Naive thymus-derived CD4-positive, alpha-beta T cell (primary cell): ENCODE measurements at regions of chr10 and their contacts with region 1.

Region 1: DNA sequence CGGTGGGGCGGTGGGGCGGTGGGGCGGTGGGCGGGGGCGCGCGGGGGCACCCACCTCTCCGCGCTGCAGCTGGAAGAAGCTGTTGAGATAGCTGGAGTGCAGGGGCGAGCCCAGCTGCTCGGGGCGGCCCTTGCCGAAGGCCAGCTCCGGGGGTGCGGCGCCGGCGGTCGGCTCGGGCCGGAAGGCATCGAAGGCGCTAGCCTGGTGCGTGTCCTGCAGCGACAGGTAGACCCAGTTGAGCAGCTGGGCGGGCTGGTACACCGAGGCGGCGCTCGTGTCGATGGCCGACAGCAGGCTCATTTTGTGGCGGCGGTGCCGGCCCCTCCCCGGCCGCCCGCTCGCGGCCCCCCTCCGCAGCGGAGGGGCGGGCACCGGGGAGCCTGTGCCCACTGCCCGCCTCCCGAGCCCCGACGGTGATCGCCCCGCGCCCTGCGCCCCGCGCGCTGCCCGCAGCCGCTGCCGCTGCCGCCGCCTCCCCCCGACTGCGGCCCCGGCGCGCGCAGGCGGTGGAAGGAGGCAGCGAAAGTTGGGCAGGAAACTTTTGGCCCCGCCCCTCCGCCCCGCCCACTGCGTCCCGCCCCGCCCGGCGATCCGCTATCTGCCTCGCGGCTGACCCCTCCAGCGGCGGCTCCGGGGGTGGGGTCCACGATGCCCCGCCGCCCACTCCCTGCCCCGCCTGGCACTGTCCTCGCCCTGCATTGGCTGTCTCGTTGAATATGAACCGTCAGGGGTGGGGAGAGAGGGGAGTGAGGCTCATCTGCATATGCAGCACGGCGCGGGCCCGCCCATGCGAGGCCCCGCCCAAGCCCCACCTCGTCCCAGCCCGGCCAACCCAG is at the start of gene ZCCHC24:
- DNase-seq: peak; percentile 83 to 95 (median 92)
- ATAC-seq: peak; percentile 95
- H3K4me3 ChIP-seq: peak within 1 kb of the TSS; percentile 78
- H3K4me3 Mint-ChIP-seq: peak within 1 kb of the TSS; percentile 86 to 99 (median 91)
- H3K27ac ChIP-seq: peak within 1 kb of the TSS; percentile 67
- H3K27ac Mint-ChIP-seq: peak within 1 kb of the TSS; percentile 27 to 91 (median 84)
- H3K4me1 ChIP-seq: peaks cover 10% of the 10 kb centered on the region in 2 donors
- H3K4me1 Mint-ChIP-seq: peaks cover 20 to 35% (median 28%) of the 10 kb centered on the region in 7 donors
- H3K27me3 ChIP-seq: no peaks in the 10 kb centered on the region
- H3K27me3 Mint-ChIP-seq: peaks cover 0 to 44% (median 0%) of the 10 kb centered on the region in 5 donors
- total RNA-seq, gene ZCCHC24: 0.58 to 2.0 (median 0.76) TPM

Region 2: DNA sequence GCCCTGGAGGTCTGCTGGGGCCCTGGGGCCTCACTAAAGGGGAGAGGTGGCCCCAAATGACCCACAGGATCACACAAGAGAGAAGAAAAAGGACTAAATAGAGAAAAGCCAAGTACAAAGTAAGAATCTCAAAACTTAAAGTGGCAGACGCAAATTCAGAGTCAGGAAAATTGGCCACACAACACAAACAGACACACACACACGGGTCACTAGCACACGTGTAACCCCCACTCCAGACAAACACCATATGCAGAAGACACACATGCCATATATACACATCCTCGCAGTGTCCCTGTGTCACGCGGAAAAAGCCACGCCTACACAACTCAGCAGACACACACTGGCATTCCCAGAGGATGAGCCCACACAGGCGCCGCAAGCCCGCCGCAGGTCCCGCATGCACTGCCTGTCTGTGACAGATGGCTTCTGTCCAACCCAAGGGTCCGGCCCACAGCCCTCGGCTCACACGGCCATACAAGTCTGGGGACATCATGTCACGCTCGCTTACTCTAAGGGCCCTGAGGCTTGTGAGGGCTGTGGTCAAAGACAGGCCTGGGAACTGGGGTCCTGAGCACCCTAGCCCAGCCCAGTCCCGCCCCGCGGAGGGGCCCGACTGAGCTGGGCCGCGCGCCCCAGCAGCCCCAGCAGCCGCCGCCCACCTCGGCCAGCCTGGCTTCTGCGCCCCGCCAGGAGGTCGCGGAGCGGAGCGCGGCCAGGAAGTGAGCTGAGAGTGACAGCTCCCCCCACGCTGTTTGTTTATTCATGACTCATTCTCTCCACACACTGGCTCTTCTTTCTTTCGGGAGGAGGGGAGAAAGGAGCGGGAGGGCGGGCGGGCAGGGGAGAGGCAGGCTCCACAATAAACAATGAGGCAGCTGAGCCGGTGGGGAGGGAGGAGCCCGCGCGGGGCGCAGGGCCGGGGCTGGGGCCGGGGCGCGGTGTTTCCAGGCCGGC is 472.1 kb before region 1 on chr10:
- CTCF ChIA-PET with region 1: no interaction called
- POLR2A ChIA-PET with region 1: no interaction called
- intact Hi-C with region 1: loop called in 1 of 2 experiments (anchors 2 kb)
- DNase-seq: peak; percentile 24 to 83 (median 43)
- ATAC-seq: peak; percentile 72
- H3K4me3 ChIP-seq: peak overlapping the region; percentile 13
- H3K4me3 Mint-ChIP-seq: peak overlapping the region; percentile 72 to 89 (median 84)
- H3K27ac ChIP-seq: no peak overlapping the region
- H3K27ac Mint-ChIP-seq: peak overlapping the region in 7 of 9 donors; percentile 2 to 85 (median 66)
- H3K4me1 ChIP-seq: peaks cover 8 to 11% of the 10 kb centered on the region in 2 donors
- H3K4me1 Mint-ChIP-seq: peaks cover 15 to 28% (median 17%) of the 10 kb centered on the region in 7 donors
- H3K27me3 ChIP-seq: no peaks in the 10 kb centered on the region
- H3K27me3 Mint-ChIP-seq: peaks cover 0 to 8% (median 0%) of the 10 kb centered on the region in 5 donors

Region 3: GRCh38 chr10:79322616-79323543 is 122.5 kb before region 1 on chr10:
- CTCF ChIA-PET with region 1: no interaction called
- POLR2A ChIA-PET with region 1: no interaction called
- intact Hi-C with region 1: loop called in 1 of 2 experiments (anchors 1 kb)
- DNase-seq: peak; percentile 53 to 92 (median 90)
- ATAC-seq: peak; percentile 90
- H3K4me3 ChIP-seq: peak overlapping the region; percentile 20
- H3K4me3 Mint-ChIP-seq: peak overlapping the region; percentile 70 to 88 (median 80)
- H3K27ac ChIP-seq: peak overlapping the region; percentile 65
- H3K27ac Mint-ChIP-seq: peak overlapping the region; percentile 77 to 99 (median 94)
- H3K4me1 ChIP-seq: peaks cover 58 to 63% of the 10 kb centered on the region in 2 donors
- H3K4me1 Mint-ChIP-seq: peaks cover 50 to 74% (median 68%) of the 10 kb centered on the region in 7 donors
- H3K27me3 ChIP-seq: no peaks in the 10 kb centered on the region
- H3K27me3 Mint-ChIP-seq: no peaks in the 10 kb centered on the region

Region 4: DNA sequence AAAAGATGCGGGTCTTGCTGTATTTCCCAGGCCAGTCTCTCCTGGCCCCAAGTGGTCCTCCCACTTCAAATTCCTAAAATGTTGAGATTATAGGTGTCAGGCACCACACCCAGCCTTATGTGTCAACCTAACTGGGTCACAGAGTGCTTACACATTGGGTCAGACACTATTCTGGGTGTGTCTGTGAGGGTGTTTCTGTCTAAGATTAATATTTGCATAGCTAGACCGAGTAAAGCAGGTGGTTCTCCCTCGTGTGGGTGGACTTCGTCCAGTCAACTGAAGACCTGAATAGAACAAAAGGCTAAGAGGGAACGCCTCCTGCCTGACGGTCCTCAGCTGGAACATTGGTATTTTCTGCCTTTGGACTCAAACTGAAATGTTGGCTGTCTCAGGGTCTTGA is 86.6 kb before region 1 on chr10:
- CTCF ChIA-PET with region 1: no interaction called
- POLR2A ChIA-PET with region 1: no interaction called
- intact Hi-C with region 1: no loop called
- DNase-seq: peak in 1 of 9 donors; percentile 8
- ATAC-seq: no peak
- H3K4me3 ChIP-seq: no peak overlapping the region
- H3K4me3 Mint-ChIP-seq: no peak overlapping the region
- H3K27ac ChIP-seq: no peak overlapping the region
- H3K27ac Mint-ChIP-seq: no peak overlapping the region
- H3K4me1 ChIP-seq: no peaks in the 10 kb centered on the region
- H3K4me1 Mint-ChIP-seq: peaks cover 7 to 38% (median 23%) of the 10 kb centered on the region in 7 donors
- H3K27me3 ChIP-seq: no peaks in the 10 kb centered on the region
- H3K27me3 Mint-ChIP-seq: peaks cover 0 to 19% (median 0%) of the 10 kb centered on the region in 5 donors

Region 5: GRCh38 chr10:80078448-80079311 is 633.3 kb after region 1 on chr10 and contains the start of gene TMEM254:
- CTCF ChIA-PET with region 1: no interaction called
- POLR2A ChIA-PET with region 1: no interaction called
- intact Hi-C with region 1: loop called in 1 of 2 experiments (anchors 2 kb)
- DNase-seq: peak; percentile 79 to 87 (median 85)
- ATAC-seq: peak; percentile 87
- H3K4me3 ChIP-seq: peak within 1 kb of the TSS; percentile 88
- H3K4me3 Mint-ChIP-seq: peak within 1 kb of the TSS; percentile 90 to 100 (median 96)
- H3K27ac ChIP-seq: peak within 1 kb of the TSS; percentile 87
- H3K27ac Mint-ChIP-seq: peak within 1 kb of the TSS; percentile 88 to 99 (median 95)
- H3K4me1 ChIP-seq: peaks cover 6 to 12% of the 10 kb centered on the region in 2 donors
- H3K4me1 Mint-ChIP-seq: peaks cover 14 to 25% (median 20%) of the 10 kb centered on the region in 7 donors
- H3K27me3 ChIP-seq: no peaks in the 10 kb centered on the region
- H3K27me3 Mint-ChIP-seq: no peaks in the 10 kb centered on the region
- total RNA-seq, gene TMEM254: 7.3 to 19.6 (median 17.1) TPM

Region 6: DNA sequence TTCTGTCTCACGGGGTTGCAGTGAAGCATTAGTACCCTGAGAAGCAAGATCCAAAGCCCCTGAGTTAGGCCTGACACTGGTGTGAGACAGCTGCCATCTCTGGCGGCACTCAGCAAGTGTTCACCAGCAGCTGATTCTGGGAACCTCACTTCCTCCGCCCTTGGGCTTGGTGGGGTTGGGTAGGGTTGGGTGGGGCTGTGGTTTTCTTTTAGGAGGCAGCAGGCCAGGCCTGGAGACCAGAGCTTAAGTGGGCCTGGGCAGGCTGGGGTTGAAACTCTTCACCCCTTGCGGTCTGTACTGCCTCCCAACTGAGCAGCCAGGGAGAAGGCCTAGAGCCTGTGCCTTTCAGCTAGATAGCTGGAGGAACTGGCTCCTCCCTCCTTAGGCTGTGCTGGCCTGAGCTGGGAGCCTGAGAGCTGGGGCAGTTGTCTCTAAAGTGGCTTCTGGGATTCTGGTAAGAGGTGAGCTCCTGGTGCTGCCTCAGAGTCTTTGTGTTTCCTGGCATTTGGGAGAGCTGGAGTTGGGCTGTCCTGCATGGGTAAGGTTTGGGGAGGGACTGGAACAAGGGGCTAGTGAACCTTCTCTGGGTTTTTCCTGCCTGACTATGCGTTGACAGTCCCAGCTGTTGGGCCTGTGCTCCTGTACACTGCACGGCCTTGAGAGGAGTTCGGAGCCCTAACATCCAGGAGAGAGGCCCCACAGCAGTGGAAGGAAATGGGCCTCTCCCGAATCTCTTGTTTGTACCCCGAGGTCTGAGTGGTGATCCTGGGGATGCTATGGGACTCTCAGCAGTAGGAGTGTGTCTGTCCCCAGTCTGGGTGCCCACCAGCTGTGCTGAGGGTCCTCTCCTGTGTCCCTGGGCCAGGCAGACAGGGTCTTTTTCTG is 1013.9 kb after region 1 on chr10:
- CTCF ChIA-PET with region 1: no interaction called
- POLR2A ChIA-PET with region 1: no interaction called
- intact Hi-C with region 1: loop called in 1 of 2 experiments (anchors 10 kb)
- DNase-seq: peak in 7 of 9 donors; percentile 53 to 66 (median 55)
- ATAC-seq: peak; percentile 66
- H3K4me3 ChIP-seq: peak overlapping the region; percentile 87
- H3K4me3 Mint-ChIP-seq: peak overlapping the region; percentile 79 to 99 (median 98)
- H3K27ac ChIP-seq: peak overlapping the region; percentile 84
- H3K27ac Mint-ChIP-seq: peak overlapping the region; percentile 87 to 99 (median 98)
- H3K4me1 ChIP-seq: peaks cover 75 to 79% of the 10 kb centered on the region in 2 donors
- H3K4me1 Mint-ChIP-seq: peaks cover 77 to 85% (median 83%) of the 10 kb centered on the region in 7 donors
- H3K27me3 ChIP-seq: no peaks in the 10 kb centered on the region
- H3K27me3 Mint-ChIP-seq: no peaks in the 10 kb centered on the region